HepG2 (cell line): ENCODE measurements at regions of chr9 and their contacts with region 1.

Region 1: DNA sequence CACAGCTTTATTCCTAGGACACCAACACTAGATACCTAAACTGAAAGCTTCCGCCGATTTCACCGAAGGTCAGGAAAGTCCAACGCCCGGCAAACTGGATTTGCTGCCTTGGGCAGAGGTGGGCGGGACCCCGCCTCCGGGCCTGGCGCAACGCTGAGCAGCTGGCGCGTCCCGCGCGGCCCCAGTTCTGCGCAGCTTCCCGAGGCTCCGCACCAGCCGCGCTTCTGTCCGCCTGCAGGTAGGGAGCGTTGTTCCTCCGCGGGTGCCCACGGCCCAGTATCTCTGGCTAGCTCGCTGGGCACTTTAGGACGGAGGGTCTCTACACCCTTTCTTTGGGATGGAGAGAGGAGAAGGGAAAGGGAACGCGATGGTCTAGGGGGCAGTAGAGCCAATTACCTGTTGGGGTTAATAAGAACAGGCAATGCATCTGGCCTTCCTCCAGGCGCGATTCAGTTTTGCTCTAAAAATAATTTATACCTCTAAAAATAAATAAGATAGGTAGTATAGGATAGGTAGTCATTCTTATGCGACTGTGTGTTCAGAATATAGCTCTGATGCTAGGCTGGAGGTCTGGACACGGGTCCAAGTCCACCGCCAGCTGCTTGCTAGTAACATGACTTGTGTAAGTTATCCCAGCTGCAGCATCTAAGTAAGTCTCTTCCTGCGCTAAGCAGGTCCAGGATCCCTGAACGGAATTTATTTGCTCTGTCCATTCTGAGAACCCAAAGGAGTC is at the start of gene CD274:
- DNase-seq: peak; percentile 85
- ATAC-seq: peak; percentile 100
- H3K4me3 ChIP-seq: peak within 1 kb of the TSS; percentile 26 to 64 (median 47)
- H3K27ac ChIP-seq: no peak within 1 kb of the TSS
- H3K4me1 ChIP-seq: peaks cover 8% of the 10 kb centered on the region
- H3K27me3 ChIP-seq: peaks cover 0 to 4% of the 10 kb centered on the region in 2 experiments; a peak in 1 of 5 replicates
- CTCF ChIP-seq: peak; percentile 89
- EP300 ChIP-seq: no peak
- POLR2A ChIP-seq: no peak
- RAD21 ChIP-seq: peak; percentile 79
- total RNA-seq, gene CD274: 0.49 TPM in 1 of 2 replicates, not detected in the other

Region 2: GRCh38 chr9:5437254-5438216 is 13.0 kb before region 1 on chr9 and contains the start of gene PLGRKT:
- CTCF ChIA-PET with region 1: no interaction called
- POLR2A ChIA-PET with region 1: interaction called, 17 read pairs
- in situ Hi-C with region 1: no loop called
- intact Hi-C with region 1: no loop called
- DNase-seq: peak; percentile 93
- ATAC-seq: peak; percentile 99
- H3K4me3 ChIP-seq: peak within 1 kb of the TSS; percentile 72 to 81 (median 78)
- H3K27ac ChIP-seq: peak within 1 kb of the TSS; percentile 86
- H3K4me1 ChIP-seq: peaks cover 29% of the 10 kb centered on the region
- H3K27me3 ChIP-seq: no peaks in the 10 kb centered on the region; a peak in 1 of 5 replicates
- CTCF ChIP-seq: peak; percentile 68
- EP300 ChIP-seq: 0 out of 4 replicates have a peak, but pooled peaks of 1 of the 2 experiments have one; percentile 14
- POLR2A ChIP-seq: peak; percentile 87 to 88
- RAD21 ChIP-seq: 0 out of 2 replicates have a peak, but pooled peaks have one; percentile 39
- total RNA-seq, gene PLGRKT: 15.8 and 20.2 TPM in 2 replicates

Region 3: DNA sequence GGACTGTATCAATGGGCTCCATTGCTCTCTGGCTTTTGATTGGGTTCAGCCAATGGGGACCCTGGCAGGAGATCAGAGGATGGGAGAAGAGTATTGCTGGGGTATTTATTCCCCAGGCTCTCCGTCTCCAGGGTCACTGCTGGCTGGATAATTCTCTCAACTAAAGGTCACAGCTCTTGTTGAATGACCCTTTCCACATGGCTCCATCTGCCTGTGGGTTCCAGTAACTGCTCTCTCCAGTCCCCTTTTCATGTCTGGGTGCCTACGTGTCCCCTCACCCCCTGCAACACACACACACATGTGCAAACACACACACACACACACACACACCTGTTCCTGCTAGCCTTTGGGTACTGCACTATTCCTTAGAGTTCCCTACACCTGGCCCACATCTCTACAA is 124.5 kb after region 1 on chr9:
- CTCF ChIA-PET with region 1: no interaction called
- POLR2A ChIA-PET with region 1: no interaction called
- in situ Hi-C with region 1: no loop called
- intact Hi-C with region 1: no loop called
- DNase-seq: peak; percentile 7
- ATAC-seq: peak; percentile 55; the same call in 2 of the 3 replicates
- H3K4me3 ChIP-seq: no peak overlapping the region
- H3K27ac ChIP-seq: no peak overlapping the region
- H3K4me1 ChIP-seq: no peaks in the 10 kb centered on the region
- H3K27me3 ChIP-seq: no peaks in the 10 kb centered on the region
- CTCF ChIP-seq: peak; percentile 10; the same call in 1 of the 2 replicates
- EP300 ChIP-seq: no peak
- POLR2A ChIP-seq: no peak
- RAD21 ChIP-seq: no peak

Region 4: GRCh38 chr9:5644501-5644900 is 194.0 kb after region 1 on chr9:
- CTCF ChIA-PET with region 1: no interaction called
- POLR2A ChIA-PET with region 1: no interaction called
- in situ Hi-C with region 1: no loop called
- intact Hi-C with region 1: no loop called
- DNase-seq: no peak
- ATAC-seq: no peak
- H3K4me3 ChIP-seq: no peak overlapping the region
- H3K27ac ChIP-seq: no peak overlapping the region
- H3K4me1 ChIP-seq: peaks cover 23% of the 10 kb centered on the region
- H3K27me3 ChIP-seq: no peaks in the 10 kb centered on the region
- CTCF ChIP-seq: no peak
- EP300 ChIP-seq: no peak
- POLR2A ChIP-seq: no peak
- RAD21 ChIP-seq: no peak

Region 5: GRCh38 chr9:5714501-5715401 is 264.2 kb after region 1 on chr9:
- CTCF ChIA-PET with region 1: no interaction called
- POLR2A ChIA-PET with region 1: no interaction called
- in situ Hi-C with region 1: no loop called
- intact Hi-C with region 1: loop called (anchors 1 kb)
- DNase-seq: peak; percentile 25
- ATAC-seq: peak; percentile 51
- H3K4me3 ChIP-seq: no peak overlapping the region
- H3K27ac ChIP-seq: no peak overlapping the region
- H3K4me1 ChIP-seq: peaks cover 38% of the 10 kb centered on the region
- H3K27me3 ChIP-seq: no peaks in the 10 kb centered on the region
- CTCF ChIP-seq: peak; percentile 35
- EP300 ChIP-seq: no peak
- POLR2A ChIP-seq: no peak
- RAD21 ChIP-seq: peak; percentile 21; the same call in 1 of the 2 replicates

Region 6: GRCh38 chr9:5773324-5773999 is 322.9 kb after region 1 on chr9:
- CTCF ChIA-PET with region 1: no interaction called
- POLR2A ChIA-PET with region 1: no interaction called
- in situ Hi-C with region 1: no loop called
- intact Hi-C with region 1: loop called (anchors 5 kb)
- DNase-seq: no peak
- ATAC-seq: peak; percentile 76
- H3K4me3 ChIP-seq: no peak overlapping the region
- H3K27ac ChIP-seq: no peak overlapping the region
- H3K4me1 ChIP-seq: no peaks in the 10 kb centered on the region
- H3K27me3 ChIP-seq: no peaks in the 10 kb centered on the region
- CTCF ChIP-seq: peak; percentile 50
- EP300 ChIP-seq: no peak
- POLR2A ChIP-seq: no peak
- RAD21 ChIP-seq: no peak

Region 7: DNA sequence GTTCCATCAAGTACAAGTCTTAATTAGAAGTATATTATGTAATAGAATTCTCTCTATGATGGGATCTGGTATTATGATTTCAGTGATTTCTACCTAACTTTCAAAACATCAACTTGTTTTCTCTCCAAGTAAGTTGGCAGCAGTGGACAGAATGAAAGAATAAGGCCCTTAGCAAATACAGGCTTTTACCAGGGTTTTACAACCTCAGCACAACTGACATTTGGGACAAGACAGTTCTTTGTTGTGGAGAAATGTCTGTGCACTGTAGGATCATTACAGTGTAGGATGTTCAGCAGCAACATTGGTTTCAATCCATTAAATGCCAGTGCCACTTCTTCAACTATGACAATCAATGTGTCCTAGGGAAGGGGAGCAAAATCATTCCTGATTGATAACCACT is 489.0 kb after region 1 on chr9:
- CTCF ChIA-PET with region 1: no interaction called
- POLR2A ChIA-PET with region 1: no interaction called
- in situ Hi-C with region 1: no loop called
- intact Hi-C with region 1: no loop called
- DNase-seq: no peak
- ATAC-seq: no peak
- H3K4me3 ChIP-seq: no peak overlapping the region
- H3K27ac ChIP-seq: no peak overlapping the region
- H3K4me1 ChIP-seq: no peaks in the 10 kb centered on the region
- H3K27me3 ChIP-seq: no peaks in the 10 kb centered on the region
- CTCF ChIP-seq: no peak
- EP300 ChIP-seq: no peak
- POLR2A ChIP-seq: no peak
- RAD21 ChIP-seq: no peak